ENCODE measurements at regions of chr3 and their contacts with region 1.

Region 1: DNA sequence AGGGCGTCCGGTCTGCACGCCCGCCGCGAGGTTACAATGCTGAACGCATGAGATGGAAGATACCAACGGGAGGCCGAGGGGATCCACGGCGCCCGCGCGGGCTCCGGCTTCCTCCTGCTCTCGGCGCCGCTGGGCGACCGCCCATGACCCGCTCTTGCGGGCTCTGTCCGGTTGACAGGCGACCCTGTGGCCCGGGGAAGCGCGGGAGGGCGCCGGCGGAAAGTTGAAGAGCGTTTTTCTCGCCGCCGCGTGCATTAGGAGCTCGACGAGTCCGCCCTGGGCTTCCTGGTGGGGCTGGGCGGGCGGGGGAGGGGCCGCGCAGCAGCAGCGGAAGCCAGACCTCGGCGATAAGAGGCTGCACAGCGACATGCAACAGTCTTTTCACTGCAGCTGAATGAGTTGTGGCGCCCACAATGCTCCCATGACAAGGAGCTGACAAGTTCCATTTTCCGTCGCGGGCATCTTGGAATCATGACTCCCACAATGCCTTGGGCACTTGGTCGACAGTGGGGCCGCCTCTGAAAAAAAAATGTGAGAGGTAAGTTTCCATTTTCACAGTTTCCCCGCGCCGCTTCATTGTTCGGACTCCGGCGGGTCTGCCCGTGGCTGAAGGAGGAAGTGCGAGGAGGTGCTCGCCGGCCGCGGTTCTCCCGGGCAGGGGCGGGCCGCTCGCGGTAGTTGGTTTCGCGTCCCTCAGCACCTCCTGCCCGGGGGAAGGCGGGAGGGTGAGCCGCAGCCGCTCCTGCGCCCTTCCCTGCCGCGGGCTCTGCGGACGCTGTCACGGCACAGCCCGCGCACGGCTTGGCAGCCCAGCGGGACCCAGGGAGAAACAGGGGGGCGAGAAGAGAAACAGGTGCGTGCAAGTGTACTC is at the start of gene MBNL1:
- DNase-seq: peak; percentile 70
- ATAC-seq: peak; percentile 52
- H3K4me3 ChIP-seq: peak within 1 kb of the TSS; percentile 88
- H3K27ac ChIP-seq: peak within 1 kb of the TSS; percentile 99
- H3K4me1 ChIP-seq: peaks cover 6% of the 10 kb centered on the region
- H3K27me3 ChIP-seq: no peaks in the 10 kb centered on the region
- CTCF ChIP-seq: no peak
- POLR2A ChIP-seq: peak; percentile 84
- RAD21 ChIP-seq: 0 out of 2 replicates have a peak, but pooled peaks have one; percentile 11
- total RNA-seq, gene MBNL1: 515 and 664 TPM in 2 replicates

Region 2: GRCh38 chr3:151992326-151993041 is 276.3 kb before region 1 on chr3:
- CTCF ChIA-PET with region 1: no interaction called
- POLR2A ChIA-PET with region 1: interaction called, 10 read pairs
- dilution Hi-C with region 1: no loop called
- in situ Hi-C with region 1: no loop called
- intact Hi-C with region 1: no loop called
- DNase-seq: no peak
- ATAC-seq: no peak
- H3K4me3 ChIP-seq: no peak overlapping the region
- H3K27ac ChIP-seq: no peak overlapping the region
- H3K4me1 ChIP-seq: peaks cover 2% of the 10 kb centered on the region; the same call in 1 of the 2 replicates
- H3K27me3 ChIP-seq: no peaks in the 10 kb centered on the region
- CTCF ChIP-seq: no peak
- POLR2A ChIP-seq: no peak
- RAD21 ChIP-seq: no peak

Region 3: GRCh38 chr3:152071924-152072323 is 196.9 kb before region 1 on chr3:
- CTCF ChIA-PET with region 1: no interaction called
- POLR2A ChIA-PET with region 1: no interaction called
- dilution Hi-C with region 1: no loop called
- in situ Hi-C with region 1: no loop called
- intact Hi-C with region 1: loop called (anchors 1 kb)
- DNase-seq: peak; percentile 70
- ATAC-seq: peak; percentile 85
- H3K4me3 ChIP-seq: no peak overlapping the region
- H3K27ac ChIP-seq: no peak overlapping the region
- H3K4me1 ChIP-seq: no peaks in the 10 kb centered on the region
- H3K27me3 ChIP-seq: no peaks in the 10 kb centered on the region
- CTCF ChIP-seq: peak; percentile 75
- POLR2A ChIP-seq: no peak
- RAD21 ChIP-seq: peak; percentile 91

Region 4: GRCh38 chr3:152159328-152159727 is 109.5 kb before region 1 on chr3:
- CTCF ChIA-PET with region 1: no interaction called
- POLR2A ChIA-PET with region 1: no interaction called
- dilution Hi-C with region 1: no loop called
- in situ Hi-C with region 1: no loop called
- intact Hi-C with region 1: loop called (anchors 2 kb)
- DNase-seq: peak; percentile 94
- ATAC-seq: peak; percentile 97
- H3K4me3 ChIP-seq: no peak overlapping the region
- H3K27ac ChIP-seq: no peak overlapping the region
- H3K4me1 ChIP-seq: peaks cover 2% of the 10 kb centered on the region; the same call in 1 of the 2 replicates
- H3K27me3 ChIP-seq: no peaks in the 10 kb centered on the region
- CTCF ChIP-seq: no peak
- POLR2A ChIP-seq: no peak
- RAD21 ChIP-seq: no peak

Region 5: GRCh38 chr3:152213203-152213602 is 55.6 kb before region 1 on chr3:
- CTCF ChIA-PET with region 1: no interaction called
- POLR2A ChIA-PET with region 1: no interaction called
- dilution Hi-C with region 1: no loop called
- in situ Hi-C with region 1: no loop called
- intact Hi-C with region 1: loop called (anchors 10 kb)
- DNase-seq: no peak
- ATAC-seq: peak; percentile 49; the same call in 1 of the 2 replicates
- H3K4me3 ChIP-seq: no peak overlapping the region
- H3K27ac ChIP-seq: no peak overlapping the region
- H3K4me1 ChIP-seq: peaks cover 4% of the 10 kb centered on the region
- H3K27me3 ChIP-seq: no peaks in the 10 kb centered on the region
- CTCF ChIP-seq: no peak
- POLR2A ChIP-seq: no peak
- RAD21 ChIP-seq: no peak

Region 6: GRCh38 chr3:152444029-152444641 is 175.3 kb after region 1 on chr3:
- CTCF ChIA-PET with region 1: interaction called, 3 read pairs
- POLR2A ChIA-PET with region 1: no interaction called
- dilution Hi-C with region 1: no loop called
- in situ Hi-C with region 1: no loop called
- intact Hi-C with region 1: loop called (anchors 1 kb)
- DNase-seq: peak; percentile 73
- ATAC-seq: peak; percentile 50; the same call in 1 of the 2 replicates
- H3K4me3 ChIP-seq: no peak overlapping the region
- H3K27ac ChIP-seq: no peak overlapping the region
- H3K4me1 ChIP-seq: peaks cover 4% of the 10 kb centered on the region
- H3K27me3 ChIP-seq: no peaks in the 10 kb centered on the region
- CTCF ChIP-seq: peak; percentile 64
- POLR2A ChIP-seq: no peak
- RAD21 ChIP-seq: peak; percentile 70

Measured in IMR-90 (cell line).